Activated T-helper 1 cell treated with anti-CD3 and anti-CD28 coated beads, Interleukin-12 subunit alpha, Interleukin-12 subunit beta, Interleukin-2, Interleukin-4 antibody, amounts not matched to agents 30 ng/mL and 10 ng/mL and 1 ng/mL, durations not matched to agents 14 hours and 24 hours and 36 hours (primary cell): ENCODE measurements at regions of chr6 and their contacts with region 1.

Region 1: DNA sequence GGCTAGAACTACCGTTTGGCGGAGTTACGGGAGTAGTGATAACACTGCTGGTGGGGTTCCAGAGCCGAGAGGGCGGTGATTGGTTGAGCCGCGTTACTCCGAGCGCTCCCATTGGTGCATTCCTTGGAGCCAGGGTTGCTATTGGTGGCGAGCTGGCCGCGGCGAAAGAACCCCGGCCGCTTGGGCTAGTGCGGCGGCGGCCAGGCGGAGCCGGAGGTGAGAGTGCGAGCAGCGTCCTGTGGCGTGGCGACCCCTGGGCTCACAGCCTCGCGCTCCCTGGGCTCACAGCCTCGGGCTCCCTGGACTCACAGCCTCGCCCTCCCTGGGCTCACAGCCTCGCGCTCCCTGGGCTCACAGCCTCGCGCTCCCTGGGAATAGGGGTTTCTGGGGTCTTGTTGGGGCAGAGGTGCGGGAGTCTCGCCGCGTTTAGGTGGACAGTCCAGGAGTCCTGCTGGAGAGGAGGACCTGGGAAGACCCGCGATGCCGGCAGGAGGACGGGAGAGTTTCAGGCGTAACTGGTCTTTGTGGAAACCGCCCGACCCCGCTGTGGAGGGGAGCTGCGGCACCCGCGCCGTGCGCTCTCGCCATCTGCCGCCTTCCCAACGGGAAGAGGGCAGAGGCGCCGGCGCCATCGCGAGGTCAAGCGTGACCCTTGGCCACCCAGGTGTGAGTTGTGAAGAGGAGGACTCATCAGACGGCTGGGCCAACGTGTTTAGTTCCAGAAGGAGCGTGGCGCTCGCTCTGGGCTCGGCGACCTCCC is 12.2 kb downstream of the PRDM13 start:
- DNase-seq: no peak
- H3K4me3 Mint-ChIP-seq: no peak overlapping the region
- H3K27ac Mint-ChIP-seq: no peak overlapping the region
- H3K4me1 Mint-ChIP-seq: no peaks in the 10 kb centered on the region
- H3K27me3 Mint-ChIP-seq: peaks cover 72% of the 10 kb centered on the region

Region 2: GRCh38 chr6:99603421-99604165 is 15.2 kb before region 1 on chr6:
- intact Hi-C with region 1: loop called (anchors 1 kb)
- DNase-seq: no peak
- H3K4me3 Mint-ChIP-seq: peak overlapping the region; percentile 15
- H3K27ac Mint-ChIP-seq: no peak overlapping the region
- H3K4me1 Mint-ChIP-seq: peaks cover 31% of the 10 kb centered on the region
- H3K27me3 Mint-ChIP-seq: peaks cover 85% of the 10 kb centered on the region